ENCODE measurements at regions of chr1 and their contacts with region 1.

Region 1: DNA sequence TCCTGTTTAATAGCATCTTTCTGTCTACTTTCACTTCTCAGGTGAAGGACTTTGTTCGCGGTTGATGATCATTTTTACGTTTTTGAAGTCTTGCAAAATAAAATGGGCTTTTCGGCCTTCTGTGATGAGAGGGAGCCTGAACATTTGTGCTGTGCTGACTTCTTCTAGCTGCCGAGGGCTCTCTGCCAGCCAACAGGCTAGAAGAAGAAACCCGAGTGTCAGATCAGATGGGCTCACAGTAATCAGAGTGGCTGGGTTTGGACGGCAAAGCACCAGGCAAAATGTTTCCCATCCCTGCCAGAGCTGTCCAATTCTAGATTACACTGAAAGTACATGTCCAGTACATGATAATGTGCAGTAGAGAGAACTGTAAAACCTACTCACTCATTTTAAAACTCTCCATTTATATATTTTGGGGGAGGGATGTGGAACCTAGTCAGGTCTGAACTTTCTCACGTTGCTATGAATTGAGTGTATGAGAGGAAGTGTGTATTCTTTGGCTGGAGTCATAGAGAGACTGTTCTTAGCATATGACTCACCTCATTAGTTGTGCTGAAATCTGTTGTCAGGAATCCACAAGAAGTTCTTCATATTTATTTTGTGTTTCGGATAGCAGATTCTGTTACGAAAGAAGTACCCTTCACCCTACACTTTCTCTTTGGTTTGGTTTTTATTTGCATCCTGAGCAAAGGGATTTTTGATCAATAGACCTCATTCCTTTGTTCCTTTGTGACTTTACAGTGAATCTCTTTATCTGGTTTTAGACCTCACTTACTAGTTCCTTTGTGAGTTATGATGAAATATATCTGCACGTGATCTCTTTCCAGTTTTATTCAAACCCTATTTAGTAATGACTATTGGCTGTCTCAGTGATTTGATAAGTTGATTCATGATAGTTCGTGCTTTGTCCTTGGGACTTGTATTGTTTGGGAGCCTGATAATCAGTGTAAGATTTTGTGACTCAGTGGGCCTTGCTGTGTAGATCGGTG is 4.8 kb downstream of the ATP1A1 start:
- DNase-seq: peak; percentile 62
- H3K4me3 ChIP-seq: peak overlapping the region; percentile 74
- H3K27ac ChIP-seq: peak overlapping the region; percentile 70
- H3K4me1 ChIP-seq: peaks cover 63% of the 10 kb centered on the region
- CTCF ChIP-seq: no peak

Region 2: DNA sequence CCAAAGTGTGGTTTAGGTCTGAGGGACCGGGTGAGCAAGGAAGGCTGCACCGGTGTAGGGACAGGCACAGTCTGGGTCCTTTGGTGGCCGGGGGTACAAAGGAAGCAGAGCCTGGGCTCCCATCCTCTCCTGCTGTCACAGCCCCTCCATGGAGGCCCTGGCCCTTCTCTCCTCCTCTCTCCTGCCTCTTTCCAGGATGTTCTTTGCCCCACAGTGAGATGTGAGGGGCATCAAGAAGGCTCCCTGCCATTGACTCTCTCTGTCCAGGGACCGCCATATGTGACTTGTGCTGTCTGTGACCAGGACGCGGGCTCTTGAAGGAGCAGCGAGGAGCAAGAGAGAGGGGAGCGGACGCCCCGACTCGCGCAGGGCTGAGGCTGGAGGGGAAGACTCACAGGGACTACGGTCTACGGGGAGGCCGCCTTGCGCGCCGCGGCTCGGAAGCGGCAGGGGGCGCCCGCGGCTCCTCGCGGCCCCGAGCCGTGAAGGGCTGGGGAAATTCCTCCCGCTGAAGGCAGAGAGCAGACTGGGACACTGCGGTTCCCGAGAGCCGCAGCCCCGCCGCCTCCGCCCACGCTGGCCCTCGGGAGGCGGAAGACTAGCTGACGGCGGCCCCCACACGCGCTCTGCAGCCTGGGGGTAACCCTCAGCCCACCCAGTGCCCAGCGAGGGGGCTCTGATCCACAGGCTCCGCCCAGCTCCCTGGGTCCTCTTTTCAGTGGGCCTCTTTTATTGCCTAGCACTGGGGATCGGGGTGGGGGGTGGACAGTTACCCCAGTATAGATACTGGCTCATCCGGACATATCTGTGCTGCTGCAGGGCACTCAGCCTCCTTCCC is 225.9 kb before region 1 on chr1:
- CTCF ChIA-PET with region 1: no interaction called
- POLR2A ChIA-PET with region 1: interaction called, 3 read pairs
- intact Hi-C with region 1: loop called (anchors 5 kb)
- DNase-seq: peak; percentile 82
- H3K4me3 ChIP-seq: peak overlapping the region; percentile 58
- H3K27ac ChIP-seq: no peak overlapping the region
- H3K4me1 ChIP-seq: peaks cover 11% of the 10 kb centered on the region
- CTCF ChIP-seq: peak; percentile 84

Region 3: DNA sequence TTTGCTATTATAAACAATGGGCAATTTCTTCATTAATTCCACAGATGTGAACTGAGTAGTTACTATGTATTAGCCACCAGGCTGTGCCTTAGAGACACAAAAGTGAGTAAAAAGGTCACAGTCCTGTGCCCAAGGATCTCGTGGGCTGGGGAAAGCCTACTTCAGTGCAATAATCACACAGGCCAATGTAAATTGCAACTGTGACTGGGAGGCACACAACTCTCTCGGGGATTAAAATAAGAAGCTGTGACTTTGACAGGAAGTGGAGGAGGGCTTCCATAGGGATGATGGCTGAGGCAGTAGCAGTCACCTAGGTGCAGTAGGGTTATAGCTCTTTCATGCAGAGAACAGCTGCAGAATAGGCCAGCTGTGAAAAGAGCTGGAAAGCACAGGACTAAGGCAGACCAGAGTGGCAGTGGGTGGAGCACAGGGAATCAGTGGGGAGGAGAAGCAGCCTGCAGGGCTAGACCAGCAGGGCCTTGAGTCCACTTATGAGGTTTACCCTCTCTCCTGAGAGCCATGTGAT is 144.8 kb before region 1 on chr1:
- CTCF ChIA-PET with region 1: no interaction called
- POLR2A ChIA-PET with region 1: no interaction called
- intact Hi-C with region 1: loop called (anchors 5 kb)
- DNase-seq: peak; percentile 76
- H3K4me3 ChIP-seq: no peak overlapping the region
- H3K27ac ChIP-seq: peak overlapping the region; percentile 26
- H3K4me1 ChIP-seq: peaks cover 54% of the 10 kb centered on the region
- CTCF ChIP-seq: peak; percentile 75

Region 4: DNA sequence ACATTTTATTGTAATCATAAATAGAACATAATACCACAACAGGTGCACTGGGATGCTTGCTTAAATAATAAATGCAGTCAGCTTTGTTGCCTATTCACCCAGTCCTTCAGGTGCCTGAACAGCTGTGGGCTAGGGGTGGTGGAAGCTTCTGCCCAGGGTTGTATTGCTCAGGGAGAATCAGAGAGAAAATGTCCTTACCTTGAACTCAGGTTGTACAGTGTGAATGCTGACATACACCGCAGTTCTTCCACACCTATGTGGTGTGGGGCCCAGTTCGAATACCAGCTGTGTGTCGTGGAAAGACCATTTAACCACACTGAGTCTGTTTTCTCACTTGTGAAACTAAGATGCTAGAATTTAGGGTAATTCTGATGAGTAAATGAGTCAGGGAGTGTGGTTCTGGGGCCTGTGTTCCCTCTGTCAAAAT is 120.5 kb before region 1 on chr1:
- CTCF ChIA-PET with region 1: no interaction called
- POLR2A ChIA-PET with region 1: interaction called, 11 read pairs
- intact Hi-C with region 1: loop called (anchors 1 kb)
- DNase-seq: peak; percentile 97
- H3K4me3 ChIP-seq: peak overlapping the region; percentile 24
- H3K27ac ChIP-seq: peak overlapping the region; percentile 93
- H3K4me1 ChIP-seq: peaks cover 90% of the 10 kb centered on the region
- CTCF ChIP-seq: no peak

Region 5: DNA sequence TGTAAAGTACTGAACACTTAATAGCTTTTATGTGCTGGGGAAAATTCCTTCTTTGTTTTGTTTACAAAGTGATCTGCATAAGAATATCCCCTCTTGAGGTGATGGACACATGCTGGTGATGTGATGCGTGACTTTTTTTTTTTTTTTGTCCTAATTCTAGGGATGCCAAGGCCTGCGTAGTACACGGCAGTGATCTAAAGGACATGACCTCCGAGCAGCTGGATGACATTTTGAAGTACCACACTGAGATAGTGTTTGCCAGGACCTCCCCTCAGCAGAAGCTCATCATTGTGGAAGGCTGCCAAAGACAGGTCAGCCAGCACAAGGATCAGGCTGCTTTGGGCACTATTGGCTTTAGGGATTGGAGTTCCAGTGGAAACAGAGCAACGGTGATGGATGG is 19.9 kb after region 1 on chr1:
- CTCF ChIA-PET with region 1: no interaction called
- POLR2A ChIA-PET with region 1: interaction called, 12 read pairs
- intact Hi-C with region 1: no loop called
- DNase-seq: no peak
- H3K4me3 ChIP-seq: no peak overlapping the region
- H3K27ac ChIP-seq: no peak overlapping the region
- H3K4me1 ChIP-seq: no peaks in the 10 kb centered on the region
- CTCF ChIP-seq: no peak

Region 6: GRCh38 chr1:116418091-116418830 is 40.4 kb after region 1 on chr1:
- CTCF ChIA-PET with region 1: interaction called, 5 read pairs
- POLR2A ChIA-PET with region 1: interaction called, 13 read pairs
- intact Hi-C with region 1: no loop called
- DNase-seq: peak; percentile 92
- H3K4me3 ChIP-seq: peak overlapping the region; percentile 87
- H3K27ac ChIP-seq: peak overlapping the region; percentile 43
- H3K4me1 ChIP-seq: peaks cover 30% of the 10 kb centered on the region
- CTCF ChIP-seq: no peak

Region 7: DNA sequence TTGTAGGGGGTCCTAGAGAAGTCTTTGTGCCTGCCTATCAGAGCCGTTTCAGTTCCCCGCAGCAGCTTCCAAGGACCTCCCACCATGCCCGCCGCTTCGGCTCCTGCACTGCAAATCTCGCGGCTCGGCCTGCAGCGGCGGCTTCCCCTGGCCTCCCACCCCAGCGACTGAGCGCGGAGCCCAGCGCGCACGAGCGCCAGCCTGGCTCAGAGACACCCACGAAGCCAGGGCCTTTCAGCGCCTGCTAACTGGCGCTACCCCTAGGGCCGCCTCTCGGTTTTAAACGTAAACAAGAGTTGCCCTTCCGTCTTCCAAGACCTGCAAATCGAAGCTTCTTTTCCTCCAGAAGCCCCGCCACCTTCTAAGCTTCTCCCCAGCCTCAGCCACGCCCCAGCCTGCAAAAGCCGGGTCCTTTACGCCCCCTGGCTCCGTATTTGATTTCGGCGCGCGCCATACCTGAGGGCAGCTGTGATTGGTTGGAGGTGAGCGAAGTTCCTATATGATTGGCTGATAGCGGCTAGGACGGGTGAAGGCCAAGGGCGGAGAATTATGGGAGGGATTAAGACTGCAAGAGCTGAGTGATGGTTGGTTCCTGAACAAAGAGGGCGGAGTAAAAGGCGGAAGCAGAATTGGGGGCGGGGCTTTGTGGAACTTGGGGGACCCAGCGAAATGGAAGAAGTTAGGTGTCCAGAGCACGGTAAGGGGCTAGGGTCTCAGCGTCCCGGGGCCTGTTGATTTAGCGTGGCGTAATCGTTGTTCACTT is 682.0 kb after region 1 on chr1 and contains the start of gene TTF2:
- CTCF ChIA-PET with region 1: no interaction called
- POLR2A ChIA-PET with region 1: interaction called, 3 read pairs
- intact Hi-C with region 1: loop called (anchors 2 kb)
- DNase-seq: peak; percentile 99
- H3K4me3 ChIP-seq: peak within 1 kb of the TSS; percentile 90
- H3K27ac ChIP-seq: peak within 1 kb of the TSS; percentile 97
- H3K4me1 ChIP-seq: peaks cover 44% of the 10 kb centered on the region
- CTCF ChIP-seq: 0 out of 2 replicates have a peak, but pooled peaks have one; percentile 21
- total RNA-seq, gene TTF2: 81.3 and 82.6 TPM in 2 replicates

Measured in OCI-LY7 (cell line).